ENCODE measurements at regions of chr1 and their contacts with region 1.

Region 1: DNA sequence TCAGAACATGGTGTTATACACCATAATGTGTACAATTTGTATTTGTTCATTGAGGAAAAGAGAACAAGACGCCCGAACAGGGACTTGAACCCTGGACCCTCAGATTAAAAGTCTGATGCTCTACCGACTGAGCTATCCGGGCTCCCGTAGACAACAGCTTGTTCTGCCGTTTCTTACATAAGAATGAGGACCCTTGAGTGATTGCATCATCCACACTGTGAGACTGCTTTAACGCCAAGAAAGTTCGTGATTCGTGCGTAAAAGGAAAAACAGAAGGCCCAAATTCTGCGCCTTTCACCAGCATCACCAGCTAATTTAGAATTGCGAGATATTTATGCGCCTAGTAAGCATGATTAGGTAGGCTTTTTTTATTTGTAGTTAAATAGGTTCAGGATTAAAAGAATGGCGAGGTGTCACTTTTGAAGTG is 9.2 kb upstream of the MDM4 start:
- DNase-seq: peak; percentile 67 to 93 (median 91)
- H3K4me3 ChIP-seq: peak overlapping the region; percentile 67
- H3K4me3 Mint-ChIP-seq: peak overlapping the region; percentile 89 to 95 (median 93)
- H3K27ac ChIP-seq: peak overlapping the region; percentile 93
- H3K27ac Mint-ChIP-seq: peak overlapping the region; percentile 94 to 100 (median 98)
- H3K4me1 ChIP-seq: peaks cover 22% of the 10 kb centered on the region
- H3K4me1 Mint-ChIP-seq: peaks cover 30 to 46% (median 42%) of the 10 kb centered on the region in 3 donors
- H3K27me3 ChIP-seq: no peaks in the 10 kb centered on the region
- H3K27me3 Mint-ChIP-seq: peaks cover 0 to 13% of the 10 kb centered on the region in 2 donors

Region 2: GRCh38 chr1:204431310-204432165 is 75.4 kb before region 1 on chr1:
- CTCF ChIA-PET with region 1: interaction called, 54 read pairs
- POLR2A ChIA-PET with region 1: interaction called, 7 read pairs
- DNase-seq: peak; percentile 62 to 82 (median 68)
- H3K4me3 ChIP-seq: no peak overlapping the region
- H3K4me3 Mint-ChIP-seq: no peak overlapping the region
- H3K27ac ChIP-seq: no peak overlapping the region
- H3K27ac Mint-ChIP-seq: peak overlapping the region in 5 of 8 donors; percentile 17 to 71 (median 51)
- H3K4me1 ChIP-seq: no peaks in the 10 kb centered on the region
- H3K4me1 Mint-ChIP-seq: peaks cover 0 to 7% (median 4%) of the 10 kb centered on the region in 3 donors
- H3K27me3 ChIP-seq: no peaks in the 10 kb centered on the region
- H3K27me3 Mint-ChIP-seq: no peaks in the 10 kb centered on the region

Region 3: DNA sequence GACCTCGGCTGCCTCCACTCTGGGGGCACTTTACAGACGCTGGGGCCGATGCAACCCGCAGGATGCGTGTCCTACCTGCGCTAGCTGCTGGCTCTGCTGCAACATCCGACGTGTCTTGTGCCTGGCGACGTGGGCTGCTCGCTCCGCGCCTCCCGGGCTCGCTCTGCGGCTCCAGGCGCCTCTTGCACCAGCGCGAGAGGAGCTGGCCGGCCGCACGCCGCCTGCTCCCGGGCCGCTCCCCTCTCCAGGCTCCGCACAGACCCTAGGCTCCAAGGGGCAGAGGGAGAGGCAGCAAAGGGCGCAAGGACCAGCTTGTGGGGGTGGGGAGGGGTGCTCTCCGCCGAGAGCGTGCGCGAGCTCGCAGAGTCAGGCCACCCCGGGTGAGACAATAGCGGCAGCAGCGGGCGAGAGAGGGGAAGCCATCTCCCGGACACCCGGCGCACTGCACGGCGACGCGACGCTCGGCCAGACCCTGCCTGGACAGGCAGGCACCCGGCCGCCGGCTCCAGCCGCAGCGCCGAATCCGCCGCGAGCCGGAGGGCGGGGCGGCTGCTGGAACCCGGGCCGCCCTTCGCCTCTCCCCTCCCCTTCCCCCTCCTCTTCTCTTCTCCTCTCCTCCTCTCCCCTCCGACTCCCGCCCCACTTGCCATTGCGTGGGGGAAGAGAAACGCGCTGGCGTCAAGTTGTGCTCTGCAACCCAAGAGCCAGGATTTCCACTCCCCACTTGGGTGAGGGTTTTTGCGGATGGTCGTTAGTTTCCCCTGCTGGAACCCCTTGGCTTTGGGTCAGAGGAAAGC is 12.5 kb before region 1 on chr1 and contains the start of gene PIK3C2B:
- CTCF ChIA-PET with region 1: interaction called, 42 read pairs
- POLR2A ChIA-PET with region 1: interaction called, 39 read pairs
- DNase-seq: peak; percentile 54 to 78 (median 69)
- H3K4me3 ChIP-seq: peak within 1 kb of the TSS; percentile 58
- H3K4me3 Mint-ChIP-seq: peak within 1 kb of the TSS; percentile 85 to 97 (median 94)
- H3K27ac ChIP-seq: peak within 1 kb of the TSS; percentile 77
- H3K27ac Mint-ChIP-seq: peak within 1 kb of the TSS; percentile 85 to 99 (median 96)
- H3K4me1 ChIP-seq: peaks cover 30% of the 10 kb centered on the region
- H3K4me1 Mint-ChIP-seq: peaks cover 40 to 57% (median 51%) of the 10 kb centered on the region in 3 donors
- H3K27me3 ChIP-seq: no peaks in the 10 kb centered on the region
- H3K27me3 Mint-ChIP-seq: peaks cover 0 to 2% of the 10 kb centered on the region in 2 donors
- total RNA-seq, gene PIK3C2B: 19.4 to 19.6 TPM

Region 4: DNA sequence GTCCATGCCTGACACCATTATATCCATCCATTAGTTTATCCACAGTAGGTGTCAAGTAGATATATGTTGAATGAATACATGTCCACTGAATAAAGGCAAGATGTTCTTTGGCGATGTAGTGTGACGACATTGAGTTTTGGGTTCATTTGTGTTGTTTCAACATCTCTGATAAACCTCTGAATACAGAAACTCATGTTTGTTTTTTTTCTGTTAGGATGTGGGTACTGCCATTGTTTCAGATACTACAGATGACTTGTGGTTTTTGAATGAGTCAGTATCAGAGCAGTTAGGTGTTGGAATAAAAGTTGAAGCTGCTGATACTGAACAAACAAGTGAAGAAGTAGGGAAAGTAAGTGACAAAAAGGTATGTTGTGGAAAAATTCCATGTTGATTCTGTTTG is 37.3 kb after region 1 on chr1:
- CTCF ChIA-PET with region 1: interaction called, 7 read pairs
- POLR2A ChIA-PET with region 1: interaction called, 15 read pairs
- DNase-seq: peak in 2 of 5 donors; percentile 55 to 63
- H3K4me3 ChIP-seq: no peak overlapping the region
- H3K4me3 Mint-ChIP-seq: peak overlapping the region; percentile 4 to 66 (median 44)
- H3K27ac ChIP-seq: no peak overlapping the region
- H3K27ac Mint-ChIP-seq: peak overlapping the region; percentile 44 to 81 (median 74)
- H3K4me1 ChIP-seq: peaks cover 39% of the 10 kb centered on the region
- H3K4me1 Mint-ChIP-seq: peaks cover 54 to 67% (median 65%) of the 10 kb centered on the region in 3 donors
- H3K27me3 ChIP-seq: no peaks in the 10 kb centered on the region
- H3K27me3 Mint-ChIP-seq: no peaks in the 10 kb centered on the region

Region 5: DNA sequence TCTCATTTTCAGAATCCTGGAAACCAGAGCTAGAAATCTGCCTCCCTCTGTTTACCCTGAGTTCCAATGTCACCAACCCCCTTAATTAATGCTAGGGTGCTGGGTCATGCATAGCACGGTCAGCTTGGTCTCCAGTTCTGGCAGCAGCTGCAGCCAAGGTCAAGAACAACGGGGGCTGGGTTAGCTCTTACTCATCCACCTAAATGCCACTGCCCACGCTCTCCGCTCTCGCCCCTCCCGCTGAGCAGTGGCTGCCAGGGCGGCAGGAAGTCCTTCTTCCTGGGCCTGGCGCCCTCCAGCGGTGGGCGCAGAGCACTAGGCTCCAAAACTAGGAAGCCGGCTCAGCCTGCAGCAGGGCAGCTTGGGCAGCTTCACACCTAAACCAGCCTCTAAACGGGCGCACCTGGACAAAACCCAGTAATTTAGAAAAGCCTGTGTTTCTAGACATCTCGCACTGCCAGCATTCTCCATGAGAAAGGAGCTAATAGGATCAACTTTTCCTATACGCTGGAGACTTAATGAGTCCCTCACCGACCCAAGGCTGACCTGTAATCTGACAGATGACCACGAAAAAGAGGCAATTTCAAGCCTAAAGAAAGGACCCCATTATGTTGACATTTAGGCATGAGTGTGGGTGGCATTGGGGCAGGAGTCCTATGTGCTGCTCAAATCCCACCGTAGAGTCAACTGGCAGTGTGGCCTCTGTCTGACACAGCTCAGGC is 256.9 kb after region 1 on chr1:
- CTCF ChIA-PET with region 1: no interaction called
- POLR2A ChIA-PET with region 1: no interaction called
- DNase-seq: peak; percentile 14 to 66 (median 51)
- H3K4me3 ChIP-seq: peak overlapping the region; percentile 10
- H3K4me3 Mint-ChIP-seq: peak overlapping the region in 5 of 7 donors; percentile 3 to 30 (median 8)
- H3K27ac ChIP-seq: no peak overlapping the region
- H3K27ac Mint-ChIP-seq: no peak overlapping the region
- H3K4me1 ChIP-seq: peaks cover 9% of the 10 kb centered on the region
- H3K4me1 Mint-ChIP-seq: peaks cover 2 to 8% (median 7%) of the 10 kb centered on the region in 3 donors
- H3K27me3 ChIP-seq: peaks cover 6% of the 10 kb centered on the region
- H3K27me3 Mint-ChIP-seq: peaks cover 33 to 57% of the 10 kb centered on the region in 2 donors